OCI-LY7 (cell line): ENCODE measurements at regions of chr19 and their contacts with region 1.

Region 1: GRCh38 chr19:7348587-7349230 is at the start of gene ARHGEF18:
- DNase-seq: peak; percentile 97
- H3K4me3 ChIP-seq: peak within 1 kb of the TSS; percentile 96
- H3K27ac ChIP-seq: peak within 1 kb of the TSS; percentile 93
- H3K4me1 ChIP-seq: peaks cover 70% of the 10 kb centered on the region
- CTCF ChIP-seq: no peak
- total RNA-seq, gene ARHGEF18: 45.8 and 48.1 TPM in 2 replicates

Region 2: DNA sequence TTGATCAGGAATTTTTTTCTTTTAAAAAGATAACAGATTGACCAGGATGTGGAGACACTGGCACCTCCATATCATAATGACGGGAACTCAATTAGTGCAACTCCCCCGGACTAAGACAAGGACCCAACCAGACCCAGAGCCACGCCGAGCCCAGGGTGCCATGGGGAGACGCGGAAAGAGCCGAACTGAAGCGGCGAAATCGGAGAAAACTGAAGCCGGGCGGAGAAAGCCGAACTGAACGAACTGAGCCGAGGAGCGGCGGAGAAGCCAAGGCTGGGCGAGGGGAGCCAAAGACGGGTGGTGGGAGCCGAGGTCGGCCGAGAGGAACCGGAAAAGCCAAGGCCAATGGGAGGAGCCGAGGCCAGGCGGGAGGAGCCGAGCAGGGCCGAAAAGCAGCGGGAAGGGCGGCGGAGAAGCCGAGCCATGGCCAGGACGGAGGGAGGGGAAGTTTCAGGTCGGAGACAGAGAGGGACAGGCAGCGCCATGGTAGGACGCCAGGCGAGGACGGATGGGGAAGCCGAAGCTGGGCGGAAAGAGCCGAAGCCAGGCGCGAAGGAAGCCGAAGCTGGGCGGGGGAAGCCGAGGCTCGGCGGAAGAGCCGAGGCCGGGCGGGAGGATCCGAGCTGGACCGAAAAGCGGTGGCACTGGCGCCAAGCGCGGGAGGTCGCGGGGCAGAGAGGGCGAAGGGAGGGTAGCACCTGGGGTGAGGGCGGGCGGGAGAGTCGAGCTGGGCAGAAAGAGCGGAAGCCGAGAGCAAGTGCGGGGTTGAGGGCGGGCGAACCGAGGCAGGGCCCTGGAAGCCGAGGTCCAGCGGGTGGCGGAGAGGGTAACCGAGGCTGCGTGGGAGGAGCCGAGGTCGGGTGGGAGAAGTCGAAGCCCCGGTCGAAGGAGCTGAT is 249.8 kb before region 1 on chr19:
- CTCF ChIA-PET with region 1: interaction called, 3 read pairs
- POLR2A ChIA-PET with region 1: interaction called, 9 read pairs
- intact Hi-C with region 1: loop called (anchors 2 kb)
- DNase-seq: peak; percentile 93
- H3K4me3 ChIP-seq: peak overlapping the region; percentile 67
- H3K27ac ChIP-seq: peak overlapping the region; percentile 57
- H3K4me1 ChIP-seq: peaks cover 22% of the 10 kb centered on the region
- CTCF ChIP-seq: no peak

Region 3: DNA sequence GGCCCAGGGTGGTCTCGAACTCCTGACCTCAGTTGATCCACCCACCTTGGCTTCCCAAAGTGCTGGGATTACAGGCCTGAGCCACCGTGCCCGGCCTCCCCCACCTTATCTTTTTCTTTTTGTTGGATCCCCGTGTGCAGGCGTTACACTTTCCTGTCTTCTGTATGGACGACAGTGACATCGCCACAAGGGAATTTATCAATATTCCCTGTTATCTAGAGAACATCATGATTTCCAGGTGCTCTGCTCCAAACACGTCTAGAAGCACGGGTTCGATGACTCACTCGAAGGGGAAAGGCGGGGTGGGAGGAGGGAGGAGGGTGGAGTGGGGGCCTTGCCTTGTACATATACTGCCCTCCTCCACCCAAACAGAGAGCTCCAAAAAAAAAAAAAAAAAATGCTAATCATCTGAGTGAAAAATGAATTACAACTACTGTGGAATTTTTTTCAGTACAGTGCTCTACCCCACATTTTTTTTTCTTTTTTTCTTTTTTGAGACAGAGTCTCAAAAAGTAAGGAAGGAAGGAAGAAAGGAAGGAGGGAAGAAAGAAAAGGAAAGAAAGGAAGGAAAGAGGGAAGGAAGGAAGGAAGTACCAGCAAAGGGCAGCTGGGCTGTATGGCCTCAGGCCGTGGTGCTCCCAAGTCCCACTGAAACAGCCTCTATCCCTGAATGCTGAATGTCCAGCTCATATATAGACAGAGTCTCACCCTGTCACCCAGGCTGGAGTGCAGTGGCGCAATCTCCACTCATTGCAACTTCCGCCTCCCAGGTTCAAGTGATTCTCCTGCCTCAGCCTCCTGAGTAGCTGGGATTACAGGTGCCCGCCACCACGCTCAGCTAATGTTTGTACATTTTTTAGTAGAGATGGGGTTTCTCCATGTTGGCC is 91.3 kb before region 1 on chr19:
- CTCF ChIA-PET with region 1: no interaction called
- POLR2A ChIA-PET with region 1: no interaction called
- intact Hi-C with region 1: no loop called
- DNase-seq: no peak
- H3K4me3 ChIP-seq: no peak overlapping the region
- H3K27ac ChIP-seq: no peak overlapping the region
- H3K4me1 ChIP-seq: no peaks in the 10 kb centered on the region
- CTCF ChIP-seq: no peak

Region 4: GRCh38 chr19:7471696-7472615 is 123.2 kb after region 1 on chr19:
- CTCF ChIA-PET with region 1: no interaction called
- POLR2A ChIA-PET with region 1: no interaction called
- intact Hi-C with region 1: loop called (anchors 5 kb)
- DNase-seq: no peak
- H3K4me3 ChIP-seq: no peak overlapping the region
- H3K27ac ChIP-seq: no peak overlapping the region
- H3K4me1 ChIP-seq: peaks cover 7% of the 10 kb centered on the region
- CTCF ChIP-seq: no peak